Calu3 (cell line): ENCODE measurements at regions of chr6 and their contacts with region 1.

Region 1: GRCh38 chr6:32522302-32523047 is 7.6 kb downstream of the HLA-DRB5 start:
- DNase-seq: no peak
- H3K4me3 Mint-ChIP-seq: no peak overlapping the region
- H3K27ac Mint-ChIP-seq: no peak overlapping the region
- H3K4me1 Mint-ChIP-seq: no peaks in the 10 kb centered on the region
- H3K27me3 Mint-ChIP-seq: peaks cover 28% of the 10 kb centered on the region
- CTCF ChIP-seq: no peak

Region 2: DNA sequence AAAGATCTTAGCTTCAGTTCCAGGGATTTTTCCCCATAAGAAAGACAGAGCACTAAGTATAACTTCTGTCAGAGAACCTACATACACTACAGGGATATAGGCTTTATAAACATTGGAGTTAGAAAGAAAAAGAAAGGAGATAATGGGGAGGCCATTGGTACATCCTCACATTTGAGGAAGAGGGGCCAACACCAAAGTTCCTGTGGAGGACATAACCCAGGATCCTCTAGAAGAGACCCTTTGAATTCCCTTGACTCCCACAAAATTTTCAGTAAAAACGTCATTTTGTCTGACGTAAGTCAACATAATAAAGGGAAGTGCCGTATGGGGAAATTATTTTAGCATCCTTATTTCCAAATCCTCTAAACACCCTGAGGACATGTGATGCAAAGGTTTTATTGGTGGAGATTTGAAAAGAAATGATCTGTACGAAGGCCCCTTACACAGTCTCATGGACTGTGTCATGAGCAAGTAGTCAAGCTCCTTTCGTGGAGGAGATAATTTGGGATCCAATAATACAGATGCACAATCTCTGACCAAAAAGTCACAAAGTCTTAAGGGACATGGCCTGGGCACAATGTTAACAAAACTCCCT is 49.6 kb before region 1 on chr6:
- CTCF ChIA-PET with region 1: no interaction called
- intact Hi-C with region 1: no loop called
- DNase-seq: no peak
- H3K4me3 Mint-ChIP-seq: no peak overlapping the region
- H3K27ac Mint-ChIP-seq: no peak overlapping the region
- H3K4me1 Mint-ChIP-seq: peaks cover 7% of the 10 kb centered on the region
- H3K27me3 Mint-ChIP-seq: peaks cover 65% of the 10 kb centered on the region
- CTCF ChIP-seq: no peak

Region 3: DNA sequence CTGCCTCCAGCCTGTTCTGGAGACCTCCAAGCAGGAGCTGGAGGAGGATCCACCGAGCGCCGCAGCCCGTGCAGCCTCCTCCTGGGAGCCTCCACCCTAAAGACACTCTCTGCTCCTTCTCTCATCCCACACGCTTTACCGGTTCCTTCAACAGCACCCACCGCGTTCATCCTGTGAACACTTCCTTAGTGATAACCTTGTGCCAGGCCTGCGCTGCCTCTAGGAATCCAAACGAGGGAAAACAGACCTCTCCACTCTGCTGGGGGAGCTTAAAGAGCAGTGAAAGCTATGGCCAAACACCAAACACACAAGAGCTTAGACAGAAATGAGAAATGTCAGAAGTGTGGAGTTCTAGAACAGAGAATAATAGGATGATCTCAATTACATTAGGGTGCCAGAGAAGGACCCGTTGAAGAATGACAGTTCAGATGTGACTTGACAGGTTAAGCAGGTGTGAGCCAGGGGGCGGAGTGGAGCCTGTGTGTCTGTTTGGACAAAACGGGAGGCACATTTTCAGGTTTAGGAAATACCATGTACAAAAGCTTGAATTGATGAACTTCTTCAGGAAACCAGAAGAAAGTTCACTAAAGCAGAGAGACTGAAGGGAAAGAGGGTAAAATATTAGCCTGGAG is 36.1 kb after region 1 on chr6:
- CTCF ChIA-PET with region 1: interaction called, 18 read pairs
- intact Hi-C with region 1: no loop called
- DNase-seq: no peak
- H3K4me3 Mint-ChIP-seq: peak overlapping the region; percentile 59
- H3K27ac Mint-ChIP-seq: no peak overlapping the region
- H3K4me1 Mint-ChIP-seq: peaks cover 8% of the 10 kb centered on the region
- H3K27me3 Mint-ChIP-seq: peaks cover 24% of the 10 kb centered on the region
- CTCF ChIP-seq: no peak

Region 4: GRCh38 chr6:32589598-32590449 is 67.3 kb after region 1 on chr6 and contains the start of gene HLA-DRB1:
- CTCF ChIA-PET with region 1: no interaction called
- intact Hi-C with region 1: loop called (anchors 1 kb)
- DNase-seq: peak; percentile 54
- H3K4me3 Mint-ChIP-seq: peak within 1 kb of the TSS; percentile 56
- H3K27ac Mint-ChIP-seq: peak within 1 kb of the TSS; percentile 22
- H3K4me1 Mint-ChIP-seq: peaks cover 12% of the 10 kb centered on the region
- H3K27me3 Mint-ChIP-seq: peaks cover 14% of the 10 kb centered on the region
- CTCF ChIP-seq: no peak
- total RNA-seq, gene HLA-DRB1: 111 and 141 TPM in 2 replicates